Dendritic cell treated with granulocyte-macrophage colony-stimulating factor and Interleukin-4, amounts not matched to agents 40 ng/mL and 50 ng/mL, for 4 days (primary cell): ENCODE measurements at regions of chr6 and their contacts with region 1.

Region 1: DNA sequence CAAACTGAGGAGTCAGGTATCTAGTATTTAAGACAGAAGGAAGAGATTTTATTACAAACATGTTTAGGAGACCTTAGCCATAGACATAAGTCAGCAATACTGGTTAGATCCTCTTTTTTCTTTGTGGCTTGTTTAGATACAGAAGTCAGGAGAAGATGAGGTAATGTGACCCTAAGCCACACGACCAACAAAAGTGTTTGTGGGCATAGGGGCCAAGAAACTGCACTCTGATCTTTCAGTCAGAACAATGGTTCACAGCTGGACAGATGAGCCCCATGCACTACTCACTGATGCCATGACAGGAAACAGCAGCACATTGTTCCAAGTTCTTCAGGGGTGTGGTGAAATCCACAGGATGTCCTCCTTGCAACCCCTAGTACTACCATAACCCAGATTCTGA is 238.5 kb upstream of the RAB32 start:
- H3K4me3 Mint-ChIP-seq: no peak overlapping the region
- H3K27ac Mint-ChIP-seq: peak overlapping the region; percentile 43
- H3K4me1 Mint-ChIP-seq: peaks cover 37% of the 10 kb centered on the region
- H3K27me3 Mint-ChIP-seq: no peaks in the 10 kb centered on the region

Region 2: GRCh38 chr6:146357578-146358430 is 52.7 kb after region 1 on chr6:
- intact Hi-C with region 1: loop called (anchors 5 kb)
- H3K4me3 Mint-ChIP-seq: peak overlapping the region; percentile 65
- H3K27ac Mint-ChIP-seq: peak overlapping the region; percentile 90
- H3K4me1 Mint-ChIP-seq: peaks cover 60% of the 10 kb centered on the region
- H3K27me3 Mint-ChIP-seq: no peaks in the 10 kb centered on the region

Region 3: DNA sequence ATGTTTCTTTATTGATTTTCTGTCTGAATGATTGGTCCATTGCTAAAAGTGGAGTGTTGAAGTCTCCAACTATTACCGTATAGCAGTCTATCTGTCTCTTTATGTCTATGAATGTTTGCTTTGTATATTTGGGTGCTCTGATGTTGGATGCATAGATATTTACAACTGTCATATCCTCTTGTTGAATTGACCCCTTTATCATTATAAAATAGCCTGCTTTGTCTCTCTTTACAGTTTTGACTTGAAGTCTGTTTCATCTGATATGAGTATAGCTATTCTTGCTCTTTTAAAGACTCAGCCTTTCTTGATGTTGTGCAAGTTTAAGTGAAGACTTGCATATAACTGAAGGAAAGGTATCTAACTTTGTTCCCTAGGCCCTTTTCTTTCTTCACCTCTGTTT is 64.8 kb after region 1 on chr6:
- intact Hi-C with region 1: no loop called
- H3K4me3 Mint-ChIP-seq: no peak overlapping the region
- H3K27ac Mint-ChIP-seq: no peak overlapping the region
- H3K4me1 Mint-ChIP-seq: peaks cover 5% of the 10 kb centered on the region
- H3K27me3 Mint-ChIP-seq: peaks cover 11% of the 10 kb centered on the region